Activated T-helper 2 cell treated with anti-CD3 and anti-CD28 coated beads, Interferon-gamma antibody, Interleukin-2, Interleukin-4, amounts not matched to agents 10 μg/mL and 5 μg/mL and 100 μg/mL, durations not matched to agents 14 hours and 24 hours and 36 hours (primary cell): ENCODE measurements at regions of chr7 and their contacts with region 1.

Region 1: DNA sequence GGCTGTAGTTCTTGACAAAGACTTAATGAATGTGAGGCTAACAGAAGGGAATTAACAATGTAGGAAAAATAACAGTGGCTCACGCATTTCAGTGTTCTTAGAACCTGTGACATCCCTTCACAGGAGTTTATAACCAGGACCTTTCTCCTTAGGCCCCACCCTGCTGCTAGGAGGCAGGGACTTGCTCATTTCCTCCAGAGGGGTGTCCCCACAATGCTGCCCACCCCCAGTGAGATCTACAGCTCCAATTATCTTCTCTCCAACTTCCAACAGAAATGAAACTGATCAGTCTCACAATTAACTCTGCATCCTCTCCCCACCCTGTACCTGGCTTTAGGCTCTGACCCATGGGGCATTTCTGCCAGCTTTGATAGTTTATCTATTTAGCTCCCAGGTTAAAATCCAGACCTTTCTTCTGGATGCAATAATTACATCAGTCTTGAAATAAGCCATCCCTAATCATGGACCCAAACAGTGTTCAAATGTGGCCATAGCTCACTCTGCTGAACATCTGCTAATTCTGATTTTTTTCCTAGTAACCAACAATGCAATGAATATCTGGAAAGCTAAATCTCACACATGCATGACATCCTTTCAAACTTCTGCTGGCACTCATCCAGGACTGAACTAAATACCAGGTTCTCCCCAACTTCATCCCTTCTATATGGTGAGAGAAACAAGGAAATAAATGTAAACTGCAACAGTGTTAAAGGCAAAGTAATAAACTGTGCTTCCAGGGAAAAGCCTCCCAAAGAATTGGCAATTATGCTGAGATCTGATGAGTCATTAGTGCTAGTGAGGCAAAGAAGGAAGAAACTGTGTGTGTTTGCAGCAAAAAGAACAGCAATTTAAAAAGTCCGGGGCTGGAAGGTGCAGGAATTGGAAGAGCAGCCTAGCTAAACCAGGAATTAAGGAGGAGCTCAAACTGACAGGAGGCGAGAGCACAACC is 64.6 kb downstream of the HERPUD2 start:
- DNase-seq: no peak
- H3K4me3 Mint-ChIP-seq: no peak overlapping the region
- H3K27ac Mint-ChIP-seq: no peak overlapping the region
- H3K4me1 Mint-ChIP-seq: no peaks in the 10 kb centered on the region
- H3K27me3 Mint-ChIP-seq: no peaks in the 10 kb centered on the region

Region 2: GRCh38 chr7:35891004-35891830 is 260.9 kb after region 1 on chr7:
- intact Hi-C with region 1: no loop called
- DNase-seq: no peak
- H3K4me3 Mint-ChIP-seq: no peak overlapping the region
- H3K27ac Mint-ChIP-seq: no peak overlapping the region
- H3K4me1 Mint-ChIP-seq: peaks cover 17% of the 10 kb centered on the region
- H3K27me3 Mint-ChIP-seq: no peaks in the 10 kb centered on the region

Region 3: DNA sequence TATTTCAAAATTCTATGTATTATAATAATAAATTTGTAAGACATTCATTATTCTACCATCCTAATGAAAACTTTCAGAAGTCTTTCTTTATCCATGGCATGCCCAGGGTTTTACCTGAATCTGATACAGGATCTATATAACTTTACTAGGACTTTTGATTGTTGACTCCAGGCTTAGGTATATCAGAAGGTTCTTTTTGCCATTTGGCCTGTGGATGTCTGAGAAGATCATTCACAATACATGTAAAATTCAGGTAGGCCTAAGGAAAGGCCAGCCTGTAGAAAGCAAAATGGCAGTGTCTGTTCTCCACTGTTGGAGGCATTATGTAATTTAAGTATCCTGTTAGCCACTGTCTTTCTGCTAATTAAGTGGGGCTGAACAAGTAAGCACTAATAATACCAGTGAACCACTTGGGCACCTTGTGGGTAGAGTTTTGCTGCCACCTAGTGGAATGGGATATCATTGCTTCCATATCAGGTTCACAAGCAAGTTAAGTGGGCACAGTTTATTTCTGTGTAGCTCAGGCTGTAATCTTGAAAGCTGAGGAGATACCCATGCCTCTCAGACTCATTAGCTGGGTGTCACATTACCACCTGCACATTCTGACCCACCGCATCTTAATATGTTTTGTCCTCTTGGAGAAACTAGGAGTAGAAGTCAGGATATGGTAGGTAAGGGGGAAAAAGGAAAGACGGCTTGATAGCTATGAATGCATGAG is 276.1 kb after region 1 on chr7:
- intact Hi-C with region 1: loop called (anchors 2 kb)
- DNase-seq: peak; percentile 41
- H3K4me3 Mint-ChIP-seq: no peak overlapping the region
- H3K27ac Mint-ChIP-seq: no peak overlapping the region
- H3K4me1 Mint-ChIP-seq: peaks cover 3% of the 10 kb centered on the region
- H3K27me3 Mint-ChIP-seq: no peaks in the 10 kb centered on the region